Caco-2 (cell line): ENCODE measurements at regions of chr2 and their contacts with region 1.

Region 1: DNA sequence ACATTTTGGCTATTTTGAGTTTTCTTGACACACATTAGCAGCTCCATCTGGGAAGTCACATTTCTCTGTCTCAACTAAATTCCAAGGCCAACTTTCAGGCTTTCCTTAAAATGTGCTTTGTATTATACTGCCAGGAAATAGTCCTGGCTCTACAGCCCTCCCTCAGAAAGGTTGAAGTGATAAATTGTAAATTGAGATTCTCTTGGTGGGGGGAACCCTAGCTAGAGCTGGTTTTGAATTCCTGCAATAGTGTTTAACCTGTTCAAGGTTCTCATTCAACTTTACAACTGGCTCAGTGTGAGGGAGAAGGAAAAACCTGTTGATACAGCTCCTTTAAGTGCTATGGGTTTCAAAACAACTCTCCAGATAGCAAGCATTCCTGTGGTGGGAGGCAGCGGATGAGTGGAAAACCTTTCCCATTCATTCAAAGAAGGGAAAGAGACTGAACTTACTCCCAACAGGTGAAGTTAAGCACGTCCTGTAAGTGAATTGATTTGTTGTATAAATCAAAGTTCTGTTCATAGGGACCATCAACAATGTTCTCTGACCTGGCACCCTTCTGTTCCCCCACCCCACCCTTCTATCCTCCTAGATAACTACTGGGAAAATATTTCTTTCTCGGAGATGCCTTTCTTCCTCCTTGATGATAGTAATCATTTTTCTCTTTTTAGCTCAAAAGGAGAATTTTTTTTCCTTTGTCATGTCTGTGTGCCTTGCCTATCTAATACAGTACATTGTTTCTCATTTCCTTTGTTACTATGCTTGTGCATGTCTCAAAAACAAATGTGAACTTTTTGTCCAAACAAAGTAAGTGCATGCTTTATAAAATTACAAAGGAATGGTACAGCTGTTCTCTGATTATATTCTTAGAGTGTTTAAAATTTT is 44.2 kb upstream of the SLC39A10 start:
- DNase-seq: peak; percentile 75 to 78
- H3K4me3 ChIP-seq: peak overlapping the region; percentile 22
- H3K4me3 Mint-ChIP-seq: peak overlapping the region; percentile 69
- H3K27ac Mint-ChIP-seq: peak overlapping the region; percentile 86
- H3K4me1 ChIP-seq: peaks cover 17% of the 10 kb centered on the region
- H3K4me1 Mint-ChIP-seq: peaks cover 26% of the 10 kb centered on the region
- H3K27me3 ChIP-seq: no peaks in the 10 kb centered on the region
- H3K27me3 Mint-ChIP-seq: no peaks in the 10 kb centered on the region
- CTCF ChIP-seq: no peak

Region 2: GRCh38 chr2:194907569-194907968 is 705.3 kb before region 1 on chr2:
- CTCF ChIA-PET with region 1: no interaction called
- POLR2A ChIA-PET with region 1: no interaction called
- intact Hi-C with region 1: no loop called
- DNase-seq: no peak
- H3K4me3 ChIP-seq: no peak overlapping the region
- H3K4me3 Mint-ChIP-seq: no peak overlapping the region
- H3K27ac Mint-ChIP-seq: no peak overlapping the region
- H3K4me1 ChIP-seq: no peaks in the 10 kb centered on the region
- H3K4me1 Mint-ChIP-seq: no peaks in the 10 kb centered on the region
- H3K27me3 ChIP-seq: no peaks in the 10 kb centered on the region
- H3K27me3 Mint-ChIP-seq: no peaks in the 10 kb centered on the region
- CTCF ChIP-seq: no peak

Region 3: GRCh38 chr2:195451160-195451559 is 161.7 kb before region 1 on chr2:
- CTCF ChIA-PET with region 1: no interaction called
- POLR2A ChIA-PET with region 1: no interaction called
- intact Hi-C with region 1: no loop called
- DNase-seq: no peak
- H3K4me3 ChIP-seq: no peak overlapping the region
- H3K4me3 Mint-ChIP-seq: no peak overlapping the region
- H3K27ac Mint-ChIP-seq: no peak overlapping the region
- H3K4me1 ChIP-seq: no peaks in the 10 kb centered on the region
- H3K4me1 Mint-ChIP-seq: no peaks in the 10 kb centered on the region
- H3K27me3 ChIP-seq: no peaks in the 10 kb centered on the region
- H3K27me3 Mint-ChIP-seq: no peaks in the 10 kb centered on the region
- CTCF ChIP-seq: no peak

Region 4: DNA sequence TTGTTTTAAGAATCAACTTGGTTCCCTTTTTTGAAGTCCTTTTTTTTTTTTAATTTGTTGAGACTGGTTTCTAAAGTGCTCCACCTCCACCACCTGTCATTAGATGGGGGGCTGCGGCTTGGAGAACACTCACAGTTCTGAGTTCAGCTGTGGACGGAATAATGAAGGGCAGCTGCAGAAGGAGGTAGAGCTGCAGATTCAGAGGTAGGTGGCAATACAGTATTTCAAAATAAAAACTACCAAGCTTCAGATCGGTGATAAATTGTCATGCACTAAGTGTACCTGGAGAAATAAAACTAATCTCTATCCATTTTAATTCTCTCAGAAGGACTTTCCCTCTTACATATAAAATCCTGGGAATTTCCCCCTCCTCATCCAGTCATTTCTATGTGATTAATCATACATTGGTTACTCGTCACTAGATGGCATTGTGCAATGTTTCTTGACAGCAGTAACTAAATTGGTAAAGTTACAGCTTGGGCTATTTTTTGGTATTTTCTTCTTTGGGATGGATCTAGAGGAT is 36.9 kb before region 1 on chr2:
- CTCF ChIA-PET with region 1: no interaction called
- POLR2A ChIA-PET with region 1: no interaction called
- intact Hi-C with region 1: loop called (anchors 1 kb)
- DNase-seq: no peak
- H3K4me3 ChIP-seq: no peak overlapping the region
- H3K4me3 Mint-ChIP-seq: no peak overlapping the region
- H3K27ac Mint-ChIP-seq: no peak overlapping the region
- H3K4me1 ChIP-seq: peaks cover 13% of the 10 kb centered on the region
- H3K4me1 Mint-ChIP-seq: peaks cover 7% of the 10 kb centered on the region
- H3K27me3 ChIP-seq: no peaks in the 10 kb centered on the region
- H3K27me3 Mint-ChIP-seq: no peaks in the 10 kb centered on the region
- CTCF ChIP-seq: peak in 1 of 2 experiments; percentile 37

Region 5: DNA sequence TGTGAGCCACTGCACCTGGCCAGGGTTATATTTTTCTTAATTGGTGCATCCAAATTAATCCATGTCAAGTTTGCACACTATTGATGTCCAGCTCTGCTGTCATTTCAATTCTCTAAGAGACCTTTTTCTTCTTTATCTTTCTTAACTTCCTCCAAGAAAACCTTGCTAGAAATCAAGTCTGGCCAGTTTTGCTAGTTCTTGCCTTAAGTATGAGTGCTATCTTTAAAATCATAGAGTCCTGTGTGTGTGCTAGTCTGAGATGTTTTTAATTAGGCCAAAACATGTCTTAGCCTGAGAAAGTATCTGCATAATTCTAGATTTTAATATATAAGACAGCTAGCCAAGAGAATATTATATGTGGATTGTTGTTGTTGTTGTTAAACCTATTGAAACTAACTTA is 12.1 kb before region 1 on chr2:
- CTCF ChIA-PET with region 1: interaction called, 6 read pairs
- POLR2A ChIA-PET with region 1: no interaction called
- intact Hi-C with region 1: loop called (anchors 1 kb)
- DNase-seq: no peak
- H3K4me3 ChIP-seq: no peak overlapping the region
- H3K4me3 Mint-ChIP-seq: no peak overlapping the region
- H3K27ac Mint-ChIP-seq: no peak overlapping the region
- H3K4me1 ChIP-seq: peaks cover 14% of the 10 kb centered on the region
- H3K4me1 Mint-ChIP-seq: peaks cover 8% of the 10 kb centered on the region
- H3K27me3 ChIP-seq: no peaks in the 10 kb centered on the region
- H3K27me3 Mint-ChIP-seq: no peaks in the 10 kb centered on the region
- CTCF ChIP-seq: no peak